ENCODE measurements at regions of chr2 and their contacts with region 1.

Region 1: DNA sequence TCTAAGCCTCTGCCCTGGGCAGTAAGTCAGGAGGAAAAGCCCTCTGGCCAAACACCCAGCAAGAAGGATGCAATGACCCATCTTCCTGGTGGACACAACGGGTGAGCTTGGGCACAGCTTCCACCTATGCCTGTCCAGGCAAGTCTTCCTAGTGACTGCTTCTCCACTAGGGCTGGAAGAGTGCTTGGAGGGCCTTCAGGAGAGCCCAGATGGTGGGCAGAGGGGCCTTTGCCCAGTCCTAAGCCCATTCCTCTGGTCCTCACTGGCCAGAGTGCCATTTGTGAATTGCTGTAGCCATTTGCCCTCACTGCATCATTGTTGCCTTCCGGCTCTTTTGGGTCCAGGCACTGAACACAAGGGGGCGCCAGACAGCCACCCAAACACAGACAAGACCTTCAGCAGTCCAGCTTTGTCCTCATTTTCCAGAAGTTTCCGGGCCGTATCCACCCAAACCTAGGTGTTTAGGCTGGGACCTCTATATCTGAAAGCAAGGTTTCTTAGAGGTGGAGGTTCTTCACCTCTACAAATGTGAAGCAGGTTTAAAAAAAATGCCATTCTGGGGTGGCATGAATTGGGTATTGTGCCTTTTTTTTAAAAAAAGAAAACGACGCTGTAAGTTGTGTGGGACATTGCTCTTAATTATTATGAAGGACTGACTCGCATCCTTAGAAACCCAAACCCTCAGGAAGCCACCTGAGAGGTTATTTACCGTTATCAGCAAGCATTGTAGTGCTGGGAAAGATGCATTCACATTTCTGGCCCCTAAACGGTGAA is 29.5 kb downstream of the PAX8 start:
- DNase-seq: peak; percentile 84
- H3K4me3 Mint-ChIP-seq: no peak overlapping the region
- H3K27ac Mint-ChIP-seq: peak overlapping the region; percentile 28
- H3K4me1 Mint-ChIP-seq: peaks cover 49% of the 10 kb centered on the region
- H3K27me3 Mint-ChIP-seq: no peaks in the 10 kb centered on the region
- CTCF ChIP-seq: peak; percentile 87

Region 2: GRCh38 chr2:113282747-113283533 is 33.8 kb after region 1 on chr2:
- CTCF ChIA-PET with region 1: interaction called, 4 read pairs
- intact Hi-C with region 1: loop called (anchors 2 kb)
- DNase-seq: peak; percentile 96
- H3K4me3 Mint-ChIP-seq: peak overlapping the region; percentile 55
- H3K27ac Mint-ChIP-seq: peak overlapping the region; percentile 98
- H3K4me1 Mint-ChIP-seq: peaks cover 87% of the 10 kb centered on the region
- H3K27me3 Mint-ChIP-seq: no peaks in the 10 kb centered on the region
- CTCF ChIP-seq: peak; percentile 54

Region 3: GRCh38 chr2:113390124-113390849 is 141.1 kb after region 1 on chr2:
- CTCF ChIA-PET with region 1: no interaction called
- intact Hi-C with region 1: loop called (anchors 5 kb)
- DNase-seq: peak; percentile 77
- H3K4me3 Mint-ChIP-seq: no peak overlapping the region
- H3K27ac Mint-ChIP-seq: peak overlapping the region; percentile 22
- H3K4me1 Mint-ChIP-seq: no peaks in the 10 kb centered on the region
- H3K27me3 Mint-ChIP-seq: no peaks in the 10 kb centered on the region
- CTCF ChIP-seq: peak; percentile 92